Common myeloid progenitor, CD34-positive (primary cell): ENCODE measurements at regions of chr9 and their contacts with region 1.

Region 1: DNA sequence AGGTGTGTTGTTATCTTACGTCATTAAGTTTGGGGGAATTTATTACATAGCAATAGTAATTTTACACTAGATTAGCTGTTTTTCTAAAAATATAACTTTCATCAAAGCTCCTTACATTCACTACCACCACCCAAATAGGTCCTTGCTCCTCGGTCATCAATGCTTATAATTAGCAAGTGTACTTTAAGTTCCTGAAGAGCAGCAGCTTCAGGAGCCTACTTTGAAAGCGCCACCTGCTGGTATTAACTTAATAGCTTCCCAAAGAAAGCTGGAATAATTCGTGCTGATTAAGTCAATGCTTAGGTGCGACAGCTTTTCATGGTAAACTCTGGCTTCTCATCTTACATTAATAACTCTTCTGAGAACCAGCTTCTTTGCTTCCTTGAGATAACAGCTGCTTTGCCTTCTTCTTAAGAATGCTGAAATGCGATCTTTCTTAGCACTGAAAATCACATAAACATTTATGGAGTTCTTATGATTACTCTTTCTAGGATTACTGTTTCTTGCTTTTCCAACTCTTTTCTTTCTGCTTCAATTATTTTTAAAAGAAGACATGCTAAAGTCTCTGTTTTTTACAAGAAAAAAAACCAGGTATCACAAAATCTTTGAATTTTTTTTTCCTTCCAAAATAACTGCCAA is 10.0 kb upstream of the C5 start:
- DNase-seq: peak; percentile 75 to 79 (median 78)
- H3K4me3 ChIP-seq: peak overlapping the region in 1 of 7 experiments; percentile 46
- H3K27ac ChIP-seq: no peak overlapping the region
- H3K4me1 ChIP-seq: peaks cover 0 to 14% (median 7%) of the 10 kb centered on the region in 4 experiments
- H3K27me3 ChIP-seq: no peaks in the 10 kb centered on the region

Region 2: GRCh38 chr9:120755827-120756434 is 304.2 kb before region 1 on chr9:
- CTCF ChIA-PET with region 1: interaction called, 26 read pairs
- POLR2A ChIA-PET with region 1: no interaction called
- DNase-seq: peak; percentile 61 to 71 (median 64)
- H3K4me3 ChIP-seq: no peak overlapping the region
- H3K27ac ChIP-seq: no peak overlapping the region
- H3K4me1 ChIP-seq: peaks cover 7 to 29% (median 20%) of the 10 kb centered on the region in 4 experiments
- H3K27me3 ChIP-seq: no peaks in the 10 kb centered on the region

Region 3: GRCh38 chr9:120985810-120986222 is 74.3 kb before region 1 on chr9:
- CTCF ChIA-PET with region 1: interaction called, 25 read pairs
- POLR2A ChIA-PET with region 1: no interaction called
- DNase-seq: peak; percentile 25 to 47 (median 44)
- H3K4me3 ChIP-seq: no peak overlapping the region
- H3K27ac ChIP-seq: no peak overlapping the region
- H3K4me1 ChIP-seq: peaks cover 0 to 2% (median 0%) of the 10 kb centered on the region in 4 experiments
- H3K27me3 ChIP-seq: no peaks in the 10 kb centered on the region

Region 4: GRCh38 chr9:121071756-121072421 is 11.8 kb after region 1 on chr9:
- CTCF ChIA-PET with region 1: interaction called, 56 read pairs
- POLR2A ChIA-PET with region 1: interaction called, 3 read pairs
- DNase-seq: peak; percentile 81 to 88 (median 82)
- H3K4me3 ChIP-seq: peak overlapping the region in 6 of 7 experiments; percentile 69 to 83 (median 74)
- H3K27ac ChIP-seq: peak overlapping the region; percentile 79 to 83
- H3K4me1 ChIP-seq: peaks cover 19 to 55% (median 34%) of the 10 kb centered on the region in 4 experiments
- H3K27me3 ChIP-seq: no peaks in the 10 kb centered on the region

Region 5: GRCh38 chr9:121353241-121354061 is 293.3 kb after region 1 on chr9:
- CTCF ChIA-PET with region 1: no interaction called
- POLR2A ChIA-PET with region 1: no interaction called
- DNase-seq: peak in 1 of 3 donors; percentile 39
- H3K4me3 ChIP-seq: peak overlapping the region in 2 of 7 experiments; percentile 9 to 28
- H3K27ac ChIP-seq: peak overlapping the region; percentile 2 to 10
- H3K4me1 ChIP-seq: peaks cover 6 to 72% (median 34%) of the 10 kb centered on the region in 4 experiments
- H3K27me3 ChIP-seq: no peaks in the 10 kb centered on the region